Colonic mucosa (tissue), 4 donors: ENCODE measurements at regions of chr3 and their contacts with region 1.

Region 1: GRCh38 chr3:130276203-130276803 is 69.2 kb upstream of the COL6A5 start:
- DNase-seq: peak; percentile 22
- H3K4me3 ChIP-seq: no peak overlapping the region
- H3K27ac ChIP-seq: no peak overlapping the region
- H3K4me1 ChIP-seq: no peaks in the 10 kb centered on the region
- H3K27me3 ChIP-seq: no peaks in the 10 kb centered on the region
- CTCF ChIP-seq: peak; percentile 64

Region 2: DNA sequence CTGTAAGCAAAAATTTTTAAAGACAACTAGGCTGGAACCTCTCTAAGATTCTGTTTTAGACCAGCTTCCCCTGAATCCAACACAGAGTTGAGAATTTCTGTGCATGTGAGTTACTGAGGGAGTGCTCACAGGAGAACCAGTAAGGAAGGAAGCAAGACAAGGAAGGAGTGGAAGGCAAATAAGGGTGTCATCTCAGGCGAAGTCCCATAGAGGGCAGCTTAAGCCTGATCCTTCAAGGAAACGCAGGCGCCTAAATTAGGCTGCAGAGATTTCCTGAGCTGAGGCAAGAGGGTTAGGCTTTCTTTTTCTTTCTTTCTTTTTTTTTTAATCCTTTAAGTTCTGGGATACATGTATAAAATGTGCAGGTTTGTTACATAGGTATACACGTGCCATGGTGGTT is 204.4 kb after region 1 on chr3:
- intact Hi-C with region 1: no loop called
- DNase-seq: no peak
- H3K4me3 ChIP-seq: no peak overlapping the region
- H3K27ac ChIP-seq: no peak overlapping the region
- H3K4me1 ChIP-seq: no peaks in the 10 kb centered on the region
- H3K27me3 ChIP-seq: no peaks in the 10 kb centered on the region
- CTCF ChIP-seq: no peak

Region 3: GRCh38 chr3:130539005-130539404 is 262.7 kb after region 1 on chr3:
- intact Hi-C with region 1: loop called (anchors 2 kb)
- DNase-seq: peak; percentile 37
- H3K4me3 ChIP-seq: no peak overlapping the region
- H3K27ac ChIP-seq: no peak overlapping the region
- H3K4me1 ChIP-seq: no peaks in the 10 kb centered on the region
- H3K27me3 ChIP-seq: no peaks in the 10 kb centered on the region
- CTCF ChIP-seq: peak; percentile 27